ENCODE measurements at regions of chr12 and their contacts with region 1.

Region 1: DNA sequence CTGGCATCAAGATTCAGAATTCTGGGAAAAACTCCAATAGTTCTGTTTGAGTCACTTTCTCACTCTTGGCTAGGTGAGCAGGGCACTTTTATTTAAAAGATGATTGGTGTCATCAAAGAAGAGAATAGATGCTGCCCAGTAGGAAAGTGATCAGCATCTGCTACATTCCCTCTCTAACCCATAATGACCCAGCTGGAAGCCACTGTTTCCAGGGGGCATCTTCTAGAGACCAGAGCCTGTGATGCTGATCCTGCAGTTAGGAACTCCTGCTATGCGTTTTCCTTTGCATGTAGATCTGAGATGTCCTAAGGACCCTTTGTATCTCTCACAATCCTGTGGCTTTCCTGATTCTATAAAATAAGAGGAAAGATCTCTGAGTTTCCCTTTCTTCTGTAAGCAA is 79.9 kb upstream of the TMTC1 start:
- DNase-seq: no peak
- H3K4me3 ChIP-seq: no peak overlapping the region
- CTCF ChIP-seq: no peak

Region 2: GRCh38 chr12:29334937-29335336 is 528.7 kb before region 1 on chr12:
- in situ Hi-C with region 1: no loop called
- DNase-seq: no peak
- H3K4me3 ChIP-seq: no peak overlapping the region
- CTCF ChIP-seq: no peak

Region 3: GRCh38 chr12:29818916-29819623 is 44.6 kb before region 1 on chr12:
- in situ Hi-C with region 1: loop called (anchors 5 kb)
- DNase-seq: no peak
- H3K4me3 ChIP-seq: no peak overlapping the region
- CTCF ChIP-seq: no peak

Region 4: GRCh38 chr12:30063435-30063945 is 199.8 kb after region 1 on chr12:
- in situ Hi-C with region 1: no loop called
- DNase-seq: no peak
- H3K4me3 ChIP-seq: no peak overlapping the region
- CTCF ChIP-seq: no peak